ENCODE measurements at regions of chr14 and their contacts with region 1.

Region 1: GRCh38 chr14:61326847-61327246 is 5.5 kb downstream of the PRKCH start:
- DNase-seq: no peak
- H3K4me3 Mint-ChIP-seq: peak overlapping the region; percentile 76
- H3K27ac Mint-ChIP-seq: peak overlapping the region; percentile 86
- H3K4me1 Mint-ChIP-seq: peaks cover 61% of the 10 kb centered on the region
- H3K27me3 Mint-ChIP-seq: no peaks in the 10 kb centered on the region

Region 2: DNA sequence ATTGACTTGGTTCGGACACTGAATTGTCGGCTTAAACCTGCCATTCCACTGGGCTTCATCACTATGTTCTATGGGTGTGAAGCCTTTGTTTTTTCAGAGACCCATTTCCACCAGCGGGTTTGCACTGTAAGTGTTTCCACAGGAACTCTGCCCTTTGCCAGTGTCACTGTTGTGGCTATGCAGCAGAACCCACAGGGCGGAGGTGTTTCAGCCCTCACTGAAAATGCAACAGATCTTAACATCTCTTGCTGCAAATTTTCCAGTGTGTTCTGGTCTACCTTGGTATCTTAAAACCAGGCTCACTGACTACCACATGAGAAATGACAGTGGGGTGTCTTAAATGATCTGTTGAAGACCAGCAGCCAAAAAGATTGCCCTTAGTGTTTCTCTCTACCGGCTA is 15.6 kb after region 1 on chr14:
- intact Hi-C with region 1: loop called (anchors 1 kb)
- DNase-seq: peak; percentile 83
- H3K4me3 Mint-ChIP-seq: peak overlapping the region; percentile 70
- H3K27ac Mint-ChIP-seq: peak overlapping the region; percentile 97
- H3K4me1 Mint-ChIP-seq: peaks cover 82% of the 10 kb centered on the region
- H3K27me3 Mint-ChIP-seq: no peaks in the 10 kb centered on the region